ENCODE measurements at regions of chr16 and their contacts with region 1.

Region 1: GRCh38 chr16:30526823-30527635 is 663 bp upstream of the ZNF768 start:
- DNase-seq: peak; percentile 92 to 99 (median 98)

Region 2: DNA sequence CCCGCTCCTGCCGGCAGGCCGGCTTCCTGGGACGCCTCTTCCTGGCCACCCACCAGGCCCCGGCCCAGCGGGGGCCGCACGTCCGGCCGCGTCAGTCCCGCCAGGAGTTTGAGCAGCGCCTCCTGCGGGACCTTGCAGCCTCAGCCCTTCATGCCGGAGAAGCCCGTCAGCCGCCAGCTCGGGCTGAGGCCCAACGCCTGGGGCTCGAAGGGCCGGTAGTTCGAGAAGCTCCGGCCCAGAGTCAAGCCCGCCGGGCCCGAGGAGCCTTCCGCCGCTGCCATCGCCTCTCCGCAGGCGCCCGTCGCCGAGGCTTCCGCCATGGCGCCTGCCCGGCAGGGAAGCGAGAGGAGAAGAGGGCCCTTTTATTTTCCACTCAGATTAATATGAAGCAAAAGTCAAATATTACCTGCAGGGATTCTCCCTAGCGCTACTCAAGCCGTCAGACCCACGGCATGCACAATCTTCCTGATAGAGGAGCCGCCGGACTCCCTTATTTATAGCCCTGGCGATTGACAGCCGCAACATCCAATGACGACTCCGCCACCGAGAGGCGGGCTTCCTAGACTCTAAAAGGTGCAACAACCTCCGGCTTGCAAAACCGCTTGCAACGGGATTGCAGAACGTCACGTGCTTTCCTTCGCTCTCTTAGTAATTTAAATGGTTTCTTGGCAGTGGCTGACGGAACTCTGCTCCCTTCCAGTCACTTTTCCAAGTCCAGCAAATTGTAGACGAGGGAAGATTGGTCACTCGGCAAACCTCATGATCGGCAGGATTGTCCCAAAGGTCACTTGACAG is 81.4 kb before region 1 on chr16 and contains the start of gene SEPHS2:
- intact Hi-C with region 1: loop called (anchors 5 kb)
- DNase-seq: peak; percentile 91 to 99 (median 97)

Region 3: GRCh38 chr16:30644334-30644830 is 117.4 kb after region 1 on chr16:
- intact Hi-C with region 1: no loop called
- DNase-seq: no peak

Region 4: DNA sequence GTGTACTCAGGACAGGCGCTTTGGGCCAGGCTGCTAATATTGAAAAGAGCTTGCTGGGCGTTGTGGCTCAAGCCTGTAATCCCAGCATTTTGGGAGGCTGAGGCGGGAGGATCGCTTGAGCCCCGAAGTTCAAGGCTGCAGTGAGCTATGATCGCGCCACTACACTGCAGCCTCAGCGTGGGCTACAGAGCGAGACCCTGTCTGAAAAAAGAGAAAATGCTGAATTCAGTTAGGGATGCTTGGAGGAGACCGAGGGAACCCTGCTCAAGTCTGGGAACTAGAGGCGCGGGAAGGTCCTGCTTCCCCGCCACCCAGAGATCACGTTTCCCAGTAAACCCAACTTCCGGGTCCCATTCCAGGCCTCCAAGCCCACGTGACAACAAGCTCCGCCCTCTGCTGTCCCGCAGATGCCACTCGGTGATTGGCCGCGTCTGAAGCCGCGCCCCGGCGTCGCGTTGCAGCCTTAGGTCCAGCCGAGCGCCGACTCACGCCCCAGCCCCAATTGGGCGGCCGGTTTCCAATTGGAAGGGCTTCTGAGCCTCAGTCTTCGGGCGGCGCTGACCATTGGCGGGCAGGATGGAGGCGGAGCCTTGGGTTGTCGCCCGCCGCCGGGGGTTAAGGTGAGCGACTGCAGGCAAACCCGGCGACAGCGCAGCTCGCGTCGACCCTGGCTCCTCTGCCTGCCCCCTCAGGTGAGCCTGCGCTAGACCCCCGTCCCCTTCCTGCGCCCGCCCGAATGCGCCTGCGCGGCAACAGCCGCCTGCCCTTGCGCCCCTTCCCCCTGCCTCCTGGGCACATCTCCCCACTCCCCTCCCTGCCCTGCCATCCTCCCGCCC is 221.0 kb after region 1 on chr16 and contains the start of gene PHKG2:
- intact Hi-C with region 1: no loop called
- DNase-seq: peak; percentile 98 to 100 (median 99)